ENCODE measurements at regions of chr16 and their contacts with region 1.

Region 1: DNA sequence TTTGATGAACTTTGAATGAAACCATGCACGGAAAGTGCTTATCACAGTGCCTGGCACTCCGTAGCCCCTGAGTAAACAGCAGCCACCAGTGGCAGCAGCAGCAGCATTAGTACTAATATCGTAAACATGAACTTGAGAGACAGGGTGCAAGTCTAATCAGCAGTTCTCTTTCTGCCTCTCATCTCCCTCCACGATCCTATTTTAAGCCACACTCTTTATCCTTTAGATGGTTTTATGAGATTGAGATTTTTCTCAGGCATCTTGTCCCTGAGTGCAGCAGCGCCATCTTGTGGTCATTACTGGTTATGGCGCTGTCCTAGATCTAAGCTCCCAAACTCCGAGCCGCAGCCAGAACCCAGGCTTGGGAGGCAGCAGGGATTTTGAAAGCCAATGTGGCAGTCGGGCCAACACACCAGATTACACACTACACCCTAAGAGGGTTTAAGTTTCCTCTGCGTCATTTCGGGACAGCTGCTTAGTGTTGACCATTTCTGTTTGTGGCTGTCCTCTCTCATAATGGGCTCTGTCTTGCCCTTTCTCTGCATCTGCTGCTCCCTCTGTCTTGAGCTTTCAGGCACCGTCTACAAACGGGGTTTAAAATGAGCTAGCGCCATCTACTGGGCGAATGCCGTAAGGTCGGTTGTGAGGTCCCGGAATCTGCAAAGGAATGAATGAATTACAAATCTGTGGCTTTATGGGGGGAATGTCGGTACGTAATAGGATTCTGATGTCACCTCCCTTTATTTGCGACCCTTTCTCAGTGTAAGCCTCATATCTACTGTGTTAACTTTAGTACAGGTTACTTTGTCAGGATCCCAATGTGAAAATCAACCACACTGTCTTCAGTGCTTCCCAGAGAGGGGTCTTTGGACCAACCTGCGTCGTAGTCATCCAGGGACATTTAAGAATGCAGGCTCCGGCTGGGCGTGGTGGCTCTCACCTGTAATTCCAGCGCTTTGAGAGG is 64.5 kb downstream of the CYLD start:
- DNase-seq: peak; percentile 89 to 91 (median 90)
- H3K4me3 ChIP-seq: peak overlapping the region; percentile 23 to 39
- H3K4me3 Mint-ChIP-seq: peak overlapping the region; percentile 72 to 89 (median 82)
- H3K27ac ChIP-seq: no peak overlapping the region
- H3K27ac Mint-ChIP-seq: peak overlapping the region; percentile 81 to 95 (median 90)
- H3K4me1 ChIP-seq: peaks cover 8% of the 10 kb centered on the region
- H3K4me1 Mint-ChIP-seq: peaks cover 10 to 22% (median 16%) of the 10 kb centered on the region in 4 donors
- H3K27me3 ChIP-seq: no peaks in the 10 kb centered on the region
- H3K27me3 Mint-ChIP-seq: peaks cover 0 to 2% of the 10 kb centered on the region in 2 donors

Region 2: GRCh38 chr16:50065624-50066481 is 740.5 kb before region 1 on chr16 and contains the start of gene HEATR3:
- CTCF ChIA-PET with region 1: no interaction called
- POLR2A ChIA-PET with region 1: interaction called, 5 read pairs
- intact Hi-C with region 1: loop called (anchors 1 kb)
- DNase-seq: peak; percentile 89 to 92 (median 91)
- H3K4me3 ChIP-seq: peak within 1 kb of the TSS; percentile 82 to 98
- H3K4me3 Mint-ChIP-seq: peak within 1 kb of the TSS; percentile 90 to 97 (median 93)
- H3K27ac ChIP-seq: peak within 1 kb of the TSS; percentile 79
- H3K27ac Mint-ChIP-seq: peak within 1 kb of the TSS; percentile 77 to 96 (median 94)
- H3K4me1 ChIP-seq: peaks cover 33% of the 10 kb centered on the region
- H3K4me1 Mint-ChIP-seq: peaks cover 28 to 47% (median 35%) of the 10 kb centered on the region in 4 donors
- H3K27me3 ChIP-seq: no peaks in the 10 kb centered on the region
- H3K27me3 Mint-ChIP-seq: no peaks in the 10 kb centered on the region
- total RNA-seq, gene HEATR3: 20.5 to 25.6 TPM

Region 3: DNA sequence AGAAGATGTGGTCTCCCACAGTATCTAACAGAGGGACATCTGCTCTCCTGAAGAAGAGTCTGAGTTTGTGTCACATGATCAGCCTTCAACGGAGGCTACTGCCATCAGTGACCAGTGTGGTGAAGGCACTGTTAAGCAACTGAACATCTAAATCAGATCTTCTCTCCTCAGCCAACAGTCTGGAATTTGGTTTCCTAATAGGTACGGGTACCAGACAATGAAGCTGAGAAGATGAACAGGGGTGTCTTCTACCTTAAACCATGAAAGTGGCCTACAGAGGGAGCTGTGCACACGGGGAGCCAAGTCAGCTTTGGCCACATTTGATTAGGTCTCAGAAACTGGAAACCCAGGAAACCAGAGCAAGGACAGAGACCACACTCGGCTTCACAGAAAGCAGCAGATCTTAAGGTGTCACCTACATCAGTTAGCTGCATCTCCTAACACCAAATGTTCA is 479.4 kb before region 1 on chr16:
- CTCF ChIA-PET with region 1: interaction called, 26 read pairs
- POLR2A ChIA-PET with region 1: interaction called, 3 read pairs
- intact Hi-C with region 1: loop called (anchors 1 kb)
- DNase-seq: peak; percentile 80 to 90 (median 84)
- H3K4me3 ChIP-seq: no peak overlapping the region
- H3K4me3 Mint-ChIP-seq: peak overlapping the region in 4 of 8 donors; percentile 37 to 70 (median 44)
- H3K27ac ChIP-seq: peak overlapping the region; percentile 51
- H3K27ac Mint-ChIP-seq: peak overlapping the region; percentile 74 to 98 (median 90)
- H3K4me1 ChIP-seq: peaks cover 32% of the 10 kb centered on the region
- H3K4me1 Mint-ChIP-seq: peaks cover 34 to 71% (median 38%) of the 10 kb centered on the region in 4 donors
- H3K27me3 ChIP-seq: no peaks in the 10 kb centered on the region
- H3K27me3 Mint-ChIP-seq: no peaks in the 10 kb centered on the region

Region 4: GRCh38 chr16:50548125-50548908 is 258.1 kb before region 1 on chr16 and contains the start of gene NKD1:
- CTCF ChIA-PET with region 1: interaction called, 6 read pairs
- POLR2A ChIA-PET with region 1: no interaction called
- intact Hi-C with region 1: loop called (anchors 1 kb)
- DNase-seq: peak; percentile 64 to 78 (median 69)
- H3K4me3 ChIP-seq: peak within 1 kb of the TSS in 1 of 2 donors; percentile 68
- H3K4me3 Mint-ChIP-seq: peak within 1 kb of the TSS; percentile 81 to 89 (median 88)
- H3K27ac ChIP-seq: peak within 1 kb of the TSS; percentile 43
- H3K27ac Mint-ChIP-seq: peak within 1 kb of the TSS; percentile 90 to 96 (median 95)
- H3K4me1 ChIP-seq: peaks cover 30% of the 10 kb centered on the region
- H3K4me1 Mint-ChIP-seq: peaks cover 14 to 35% (median 25%) of the 10 kb centered on the region in 4 donors
- H3K27me3 ChIP-seq: no peaks in the 10 kb centered on the region
- H3K27me3 Mint-ChIP-seq: no peaks in the 10 kb centered on the region
- total RNA-seq, gene NKD1: 3.8 to 4.6 TPM

Region 5: GRCh38 chr16:50681021-50681885 is 125.1 kb before region 1 on chr16 and contains the start of gene SNX20:
- CTCF ChIA-PET with region 1: interaction called, 458 read pairs
- POLR2A ChIA-PET with region 1: interaction called, 10 read pairs
- intact Hi-C with region 1: no loop called
- DNase-seq: peak; percentile 69 to 82 (median 76)
- H3K4me3 ChIP-seq: peak within 1 kb of the TSS; percentile 45 to 93
- H3K4me3 Mint-ChIP-seq: peak within 1 kb of the TSS; percentile 83 to 97 (median 94)
- H3K27ac ChIP-seq: peak within 1 kb of the TSS; percentile 90
- H3K27ac Mint-ChIP-seq: peak within 1 kb of the TSS; percentile 87 to 99 (median 97)
- H3K4me1 ChIP-seq: peaks cover 93% of the 10 kb centered on the region
- H3K4me1 Mint-ChIP-seq: peaks cover 69 to 95% (median 84%) of the 10 kb centered on the region in 4 donors
- H3K27me3 ChIP-seq: no peaks in the 10 kb centered on the region
- H3K27me3 Mint-ChIP-seq: no peaks in the 10 kb centered on the region
- total RNA-seq, gene SNX20: 88.9 to 90.1 TPM

Region 6: GRCh38 chr16:50756473-50756872 is 49.9 kb before region 1 on chr16:
- CTCF ChIA-PET with region 1: interaction called, 82 read pairs
- POLR2A ChIA-PET with region 1: interaction called, 6 read pairs
- intact Hi-C with region 1: no loop called
- DNase-seq: no peak
- H3K4me3 ChIP-seq: no peak overlapping the region
- H3K4me3 Mint-ChIP-seq: peak overlapping the region in 7 of 8 donors; percentile 26 to 76 (median 57)
- H3K27ac ChIP-seq: no peak overlapping the region
- H3K27ac Mint-ChIP-seq: peak overlapping the region in 5 of 7 donors; percentile 22 to 68 (median 63)
- H3K4me1 ChIP-seq: peaks cover 89% of the 10 kb centered on the region
- H3K4me1 Mint-ChIP-seq: peaks cover 63 to 92% (median 79%) of the 10 kb centered on the region in 4 donors
- H3K27me3 ChIP-seq: no peaks in the 10 kb centered on the region
- H3K27me3 Mint-ChIP-seq: no peaks in the 10 kb centered on the region

Region 7: GRCh38 chr16:50791522-50791921 is 14.9 kb before region 1 on chr16:
- CTCF ChIA-PET with region 1: interaction called, 66 read pairs
- POLR2A ChIA-PET with region 1: interaction called, 3 read pairs
- intact Hi-C with region 1: no loop called
- DNase-seq: no peak
- H3K4me3 ChIP-seq: no peak overlapping the region
- H3K4me3 Mint-ChIP-seq: no peak overlapping the region
- H3K27ac ChIP-seq: no peak overlapping the region
- H3K27ac Mint-ChIP-seq: peak overlapping the region in 4 of 7 donors; percentile 37 to 74 (median 65)
- H3K4me1 ChIP-seq: peaks cover 12% of the 10 kb centered on the region
- H3K4me1 Mint-ChIP-seq: peaks cover 12 to 28% (median 19%) of the 10 kb centered on the region in 4 donors
- H3K27me3 ChIP-seq: no peaks in the 10 kb centered on the region
- H3K27me3 Mint-ChIP-seq: no peaks in the 10 kb centered on the region

Region 8: DNA sequence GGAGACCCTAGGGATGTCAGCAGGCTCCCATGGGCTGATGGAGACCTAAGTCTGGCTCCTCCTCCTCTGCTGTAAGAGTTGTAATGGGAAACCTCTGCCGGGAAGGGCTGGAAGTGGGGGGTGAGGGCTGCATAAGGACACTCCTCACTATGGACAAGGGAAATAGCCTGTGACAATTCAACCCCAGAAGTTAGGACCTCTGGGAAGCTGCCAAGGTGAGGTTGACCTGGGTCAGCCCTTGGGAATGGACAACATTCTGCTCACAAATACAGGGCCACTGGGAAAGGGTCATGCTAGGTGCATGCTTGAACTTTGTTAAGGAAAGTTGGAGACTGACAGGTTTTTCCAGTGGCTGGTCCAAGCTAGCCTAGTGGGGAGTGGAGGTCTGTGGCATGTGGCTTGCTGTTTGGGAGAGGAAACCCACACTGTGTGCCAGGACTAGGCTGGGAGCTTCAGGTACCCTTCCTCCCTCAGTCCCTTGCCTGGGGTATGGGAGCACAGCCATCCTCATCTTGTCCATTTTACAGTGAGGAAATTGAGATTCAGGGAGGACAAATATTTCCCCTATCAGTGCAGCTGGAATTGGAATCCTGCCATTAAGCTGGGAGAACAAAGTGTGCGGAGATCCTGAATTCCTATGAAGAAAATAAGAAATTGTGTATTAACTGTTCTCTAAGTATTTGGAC is 154.3 kb after region 1 on chr16:
- CTCF ChIA-PET with region 1: no interaction called
- POLR2A ChIA-PET with region 1: no interaction called
- intact Hi-C with region 1: no loop called
- DNase-seq: no peak
- H3K4me3 ChIP-seq: no peak overlapping the region
- H3K4me3 Mint-ChIP-seq: no peak overlapping the region
- H3K27ac ChIP-seq: no peak overlapping the region
- H3K27ac Mint-ChIP-seq: no peak overlapping the region
- H3K4me1 ChIP-seq: no peaks in the 10 kb centered on the region
- H3K4me1 Mint-ChIP-seq: no peaks in the 10 kb centered on the region
- H3K27me3 ChIP-seq: no peaks in the 10 kb centered on the region
- H3K27me3 Mint-ChIP-seq: peaks cover 4 to 5% of the 10 kb centered on the region in 2 donors

Region 9: GRCh38 chr16:51374346-51374745 is 568.0 kb after region 1 on chr16:
- CTCF ChIA-PET with region 1: no interaction called
- POLR2A ChIA-PET with region 1: no interaction called
- intact Hi-C with region 1: no loop called
- DNase-seq: no peak
- H3K4me3 ChIP-seq: no peak overlapping the region
- H3K4me3 Mint-ChIP-seq: no peak overlapping the region
- H3K27ac ChIP-seq: no peak overlapping the region
- H3K27ac Mint-ChIP-seq: no peak overlapping the region
- H3K4me1 ChIP-seq: no peaks in the 10 kb centered on the region
- H3K4me1 Mint-ChIP-seq: no peaks in the 10 kb centered on the region
- H3K27me3 ChIP-seq: no peaks in the 10 kb centered on the region
- H3K27me3 Mint-ChIP-seq: no peaks in the 10 kb centered on the region

Measured in CD4-positive, alpha-beta memory T cell (primary cell).